ENCODE measurements at regions of chr17 and their contacts with region 1.

Region 1: GRCh38 chr17:63120432-63120831 is 154.4 kb downstream of the TANC2 start:
- DNase-seq: no peak
- ATAC-seq: no peak
- H3K4me3 ChIP-seq: no peak overlapping the region
- H3K4me3 Mint-ChIP-seq: no peak overlapping the region
- H3K27ac ChIP-seq: no peak overlapping the region
- H3K27ac Mint-ChIP-seq: no peak overlapping the region
- H3K4me1 ChIP-seq: no peaks in the 10 kb centered on the region
- H3K4me1 Mint-ChIP-seq: no peaks in the 10 kb centered on the region
- H3K27me3 ChIP-seq: no peaks in the 10 kb centered on the region
- H3K27me3 Mint-ChIP-seq: no peaks in the 10 kb centered on the region
- CTCF ChIP-seq: no peak

Region 2: DNA sequence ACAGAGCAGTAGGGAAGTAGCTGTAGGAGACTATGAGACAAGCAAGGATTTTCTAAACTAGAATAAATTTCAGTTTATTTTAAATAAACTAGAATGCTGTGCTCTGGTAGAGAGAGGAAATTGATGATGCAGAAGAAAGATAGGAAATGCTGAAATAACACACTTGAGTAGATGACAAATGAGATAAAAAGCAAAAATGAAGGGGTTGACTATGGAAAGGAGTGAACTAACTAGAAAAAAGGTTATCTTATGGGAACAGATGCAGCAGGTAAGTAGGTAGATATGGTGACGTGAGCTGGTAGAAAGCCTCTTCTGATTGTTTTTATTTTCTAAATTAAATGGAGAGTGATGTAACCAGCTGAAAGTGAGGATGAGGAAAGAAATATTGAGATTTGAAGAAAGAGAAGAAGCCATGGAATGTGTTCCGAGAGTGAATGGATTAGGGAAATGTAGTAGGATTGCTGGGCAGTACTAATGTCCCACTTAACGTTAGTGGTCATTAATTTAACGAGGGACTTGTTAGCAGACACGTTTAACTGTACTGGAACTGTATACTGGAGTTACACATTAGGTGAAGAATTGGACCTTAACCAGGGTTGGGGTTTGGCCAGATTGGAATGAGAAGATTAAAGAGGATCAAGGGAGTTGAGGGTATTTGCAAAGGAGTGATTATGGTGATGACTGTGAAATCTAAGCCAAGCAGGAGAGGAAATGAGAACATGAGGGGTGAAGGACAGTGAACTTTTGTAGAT is 42.1 kb after region 1 on chr17:
- CTCF ChIA-PET with region 1: no interaction called
- POLR2A ChIA-PET with region 1: interaction called, 10 read pairs
- intact Hi-C with region 1: no loop called
- DNase-seq: no peak
- ATAC-seq: no peak
- H3K4me3 ChIP-seq: no peak overlapping the region
- H3K4me3 Mint-ChIP-seq: no peak overlapping the region
- H3K27ac ChIP-seq: no peak overlapping the region
- H3K27ac Mint-ChIP-seq: no peak overlapping the region
- H3K4me1 ChIP-seq: no peaks in the 10 kb centered on the region
- H3K4me1 Mint-ChIP-seq: no peaks in the 10 kb centered on the region
- H3K27me3 ChIP-seq: no peaks in the 10 kb centered on the region
- H3K27me3 Mint-ChIP-seq: no peaks in the 10 kb centered on the region
- CTCF ChIP-seq: no peak

Measured in CD8-positive, alpha-beta T cell (primary cell).